Activated CD8-positive, alpha-beta T cell treated with anti-CD3 and anti-CD28 coated beads for 36 hours (primary cell): ENCODE measurements at regions of chr1 and their contacts with region 1.

Region 1: GRCh38 chr1:94061513-94062443 is 59.2 kb downstream of the ABCA4 start:
- DNase-seq: peak; percentile 67
- ATAC-seq: peak; percentile 85
- H3K4me3 Mint-ChIP-seq: no peak overlapping the region
- H3K27ac Mint-ChIP-seq: no peak overlapping the region
- H3K4me1 Mint-ChIP-seq: no peaks in the 10 kb centered on the region
- H3K27me3 Mint-ChIP-seq: peaks cover 4% of the 10 kb centered on the region
- CTCF ChIP-seq: peak; percentile 85

Region 2: DNA sequence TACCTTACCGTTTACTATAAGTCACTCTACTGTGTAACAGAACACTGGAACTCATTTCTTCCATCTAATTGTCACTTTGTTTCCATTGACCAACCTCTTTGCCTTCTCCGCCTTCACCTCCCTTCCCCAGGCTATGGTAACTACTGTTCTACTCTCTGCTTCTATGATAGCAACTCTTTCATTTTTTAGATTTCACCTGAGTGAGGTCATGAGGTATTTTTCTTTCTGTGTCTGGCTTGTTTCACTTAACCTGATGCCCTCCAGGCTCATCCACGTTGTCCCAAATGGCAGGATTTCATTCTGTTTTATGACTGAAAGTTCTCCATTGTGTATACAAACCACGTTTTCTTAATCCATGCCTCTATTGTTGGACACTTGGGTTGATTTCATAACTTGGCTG is 117.1 kb before region 1 on chr1:
- CTCF ChIA-PET with region 1: no interaction called
- POLR2A ChIA-PET with region 1: no interaction called
- intact Hi-C with region 1: no loop called
- DNase-seq: no peak
- ATAC-seq: no peak
- H3K4me3 Mint-ChIP-seq: no peak overlapping the region
- H3K27ac Mint-ChIP-seq: no peak overlapping the region
- H3K4me1 Mint-ChIP-seq: no peaks in the 10 kb centered on the region
- H3K27me3 Mint-ChIP-seq: peaks cover 5% of the 10 kb centered on the region
- CTCF ChIP-seq: no peak

Region 3: GRCh38 chr1:94081566-94082344 is 20.0 kb after region 1 on chr1:
- CTCF ChIA-PET with region 1: no interaction called
- POLR2A ChIA-PET with region 1: no interaction called
- intact Hi-C with region 1: no loop called
- DNase-seq: no peak
- ATAC-seq: no peak
- H3K4me3 Mint-ChIP-seq: no peak overlapping the region
- H3K27ac Mint-ChIP-seq: no peak overlapping the region
- H3K4me1 Mint-ChIP-seq: no peaks in the 10 kb centered on the region
- H3K27me3 Mint-ChIP-seq: peaks cover 2% of the 10 kb centered on the region
- CTCF ChIP-seq: no peak

Region 4: DNA sequence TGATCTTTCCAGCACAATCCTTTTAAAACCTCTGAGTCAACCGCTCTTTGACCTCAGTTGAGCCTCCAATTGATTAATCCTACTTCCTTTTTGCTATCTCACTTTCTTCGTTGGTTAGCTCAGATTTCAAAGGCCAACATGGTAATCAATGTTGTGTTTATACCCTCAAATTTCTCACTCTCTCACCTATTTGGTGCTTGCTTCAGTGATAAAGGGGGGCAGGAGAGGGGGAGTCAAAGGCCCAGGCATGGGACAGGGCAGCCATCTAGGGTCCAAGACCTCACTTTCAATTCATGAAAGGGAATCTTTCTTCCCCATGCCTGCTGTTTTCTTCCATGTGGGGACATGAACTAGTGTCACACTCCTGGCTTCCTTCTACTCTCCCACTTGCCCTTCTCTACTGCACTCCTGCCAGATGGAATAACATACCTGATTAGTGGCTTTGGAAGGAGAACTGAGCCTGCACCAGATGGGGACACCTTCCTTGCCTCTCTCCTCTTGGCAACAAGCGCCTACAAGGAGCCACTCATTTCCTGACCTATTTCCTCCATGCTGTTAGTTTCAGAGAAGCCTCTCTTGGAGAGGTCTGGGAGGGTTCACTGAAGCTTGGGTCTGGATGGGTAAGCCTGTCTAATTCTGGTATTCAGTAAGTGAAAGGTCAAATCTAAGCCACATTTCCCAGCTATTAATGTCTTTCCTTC is 248.9 kb after region 1 on chr1:
- CTCF ChIA-PET with region 1: no interaction called
- POLR2A ChIA-PET with region 1: no interaction called
- intact Hi-C with region 1: no loop called
- DNase-seq: no peak
- ATAC-seq: no peak
- H3K4me3 Mint-ChIP-seq: no peak overlapping the region
- H3K27ac Mint-ChIP-seq: no peak overlapping the region
- H3K4me1 Mint-ChIP-seq: no peaks in the 10 kb centered on the region
- H3K27me3 Mint-ChIP-seq: no peaks in the 10 kb centered on the region
- CTCF ChIP-seq: no peak

Region 5: DNA sequence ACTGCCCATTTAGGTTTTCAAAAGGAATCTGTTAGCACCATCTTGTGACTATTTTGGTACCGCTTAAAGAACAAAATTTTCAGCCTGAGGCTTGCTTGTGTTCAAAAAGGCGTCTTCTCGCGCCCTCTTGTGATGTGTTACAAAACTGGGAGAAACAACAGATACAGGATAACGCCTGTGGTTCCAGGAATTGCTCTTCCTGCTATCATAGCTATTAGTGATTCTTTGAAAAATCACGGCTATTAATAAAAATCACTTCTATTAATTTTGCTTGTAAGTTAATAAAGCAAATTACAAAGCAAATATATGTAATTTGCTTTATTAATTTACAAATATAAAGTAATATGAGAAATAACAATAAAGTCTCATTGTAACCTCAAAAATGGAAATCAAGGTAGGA is 274.2 kb after region 1 on chr1:
- CTCF ChIA-PET with region 1: interaction called, 26 read pairs
- POLR2A ChIA-PET with region 1: interaction called, 3 read pairs
- intact Hi-C with region 1: loop called (anchors 5 kb)
- DNase-seq: peak; percentile 51
- ATAC-seq: no peak
- H3K4me3 Mint-ChIP-seq: no peak overlapping the region
- H3K27ac Mint-ChIP-seq: no peak overlapping the region
- H3K4me1 Mint-ChIP-seq: no peaks in the 10 kb centered on the region
- H3K27me3 Mint-ChIP-seq: peaks cover 8% of the 10 kb centered on the region
- CTCF ChIP-seq: peak; percentile 69